ENCODE measurements at regions of chr19 and their contacts with region 1.

Region 1: DNA sequence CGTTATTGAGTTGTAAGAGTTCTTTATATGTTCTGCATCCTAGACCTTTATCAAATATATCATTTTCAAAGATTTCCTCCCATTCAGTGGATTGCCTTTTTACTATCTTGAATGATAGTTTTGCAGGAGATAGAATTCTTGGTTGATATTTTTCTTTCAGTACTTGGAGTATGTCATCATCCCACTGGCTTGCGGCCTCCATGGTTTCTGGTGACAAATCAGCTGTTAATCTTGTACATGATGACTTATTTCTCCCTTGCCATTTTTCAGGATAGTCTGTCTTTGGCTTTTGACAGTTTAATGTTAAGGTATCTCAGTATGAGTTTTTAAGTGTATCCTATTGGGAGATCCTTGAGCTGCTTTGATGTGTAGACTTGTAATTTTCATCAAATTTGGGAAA is 8.5 kb downstream of the ZNF557 start:
- DNase-seq: no peak
- ATAC-seq: no peak
- H3K4me3 ChIP-seq: no peak overlapping the region
- H3K27ac ChIP-seq: no peak overlapping the region
- H3K4me1 ChIP-seq: no peaks in the 10 kb centered on the region
- H3K27me3 ChIP-seq: no peaks in the 10 kb centered on the region
- CTCF ChIP-seq: no peak
- EP300 ChIP-seq: no peak
- POLR2A ChIP-seq: no peak
- RAD21 ChIP-seq: no peak

Region 2: GRCh38 chr19:7013678-7014077 is 64.3 kb before region 1 on chr19:
- CTCF ChIA-PET with region 1: no interaction called
- POLR2A ChIA-PET with region 1: no interaction called
- RAD21 ChIA-PET with region 1: no interaction called
- SMC1A ChIA-PET with region 1: no interaction called
- in situ Hi-C with region 1: loop called (anchors 5 kb)
- intact Hi-C with region 1: no loop called
- DNase-seq: peak; percentile 68
- ATAC-seq: peak; percentile 70
- H3K4me3 ChIP-seq: no peak overlapping the region
- H3K27ac ChIP-seq: no peak overlapping the region; the same call in 1 of the 2 replicates
- H3K4me1 ChIP-seq: peaks cover 16% of the 10 kb centered on the region
- H3K27me3 ChIP-seq: no peaks in the 10 kb centered on the region
- CTCF ChIP-seq: no peak
- EP300 ChIP-seq: peak; percentile 77 to 85; a peak in 2 of 4 replicates
- POLR2A ChIP-seq: no peak
- RAD21 ChIP-seq: no peak

Region 3: GRCh38 chr19:7257148-7258034 is 179.4 kb after region 1 on chr19:
- CTCF ChIA-PET with region 1: no interaction called
- POLR2A ChIA-PET with region 1: no interaction called
- RAD21 ChIA-PET with region 1: no interaction called
- SMC1A ChIA-PET with region 1: no interaction called
- in situ Hi-C with region 1: no loop called
- intact Hi-C with region 1: no loop called
- DNase-seq: no peak
- ATAC-seq: no peak
- H3K4me3 ChIP-seq: no peak overlapping the region
- H3K27ac ChIP-seq: no peak overlapping the region
- H3K4me1 ChIP-seq: no peaks in the 10 kb centered on the region; the same call in 1 of the 2 replicates
- H3K27me3 ChIP-seq: no peaks in the 10 kb centered on the region
- CTCF ChIP-seq: no peak
- EP300 ChIP-seq: no peak
- POLR2A ChIP-seq: no peak
- RAD21 ChIP-seq: no peak